CD8-positive, alpha-beta T cell (primary cell): ENCODE measurements at regions of chr1 and their contacts with region 1.

Region 1: GRCh38 chr1:152459596-152460528 is 45.8 kb upstream of the CRNN start:
- DNase-seq: peak; percentile 45 to 86 (median 74)
- ATAC-seq: peak; percentile 66
- H3K4me3 ChIP-seq: peak overlapping the region in 1 of 2 experiments; percentile 16
- H3K4me3 Mint-ChIP-seq: peak overlapping the region; percentile 70
- H3K27ac ChIP-seq: peak overlapping the region in 1 of 2 experiments; percentile 72
- H3K27ac Mint-ChIP-seq: peak overlapping the region; percentile 83
- H3K4me1 ChIP-seq: no peaks in the 10 kb centered on the region
- H3K4me1 Mint-ChIP-seq: peaks cover 26% of the 10 kb centered on the region
- H3K27me3 ChIP-seq: no peaks in the 10 kb centered on the region
- H3K27me3 Mint-ChIP-seq: peaks cover 2% of the 10 kb centered on the region
- CTCF ChIP-seq: peak; percentile 70

Region 2: GRCh38 chr1:152347116-152347728 is 112.6 kb before region 1 on chr1:
- CTCF ChIA-PET with region 1: interaction called, 23 read pairs
- POLR2A ChIA-PET with region 1: interaction called, 3 read pairs
- intact Hi-C with region 1: loop called (anchors 1 kb)
- DNase-seq: peak in 8 of 9 experiments; percentile 5 to 71 (median 36)
- ATAC-seq: peak; percentile 58
- H3K4me3 ChIP-seq: no peak overlapping the region
- H3K4me3 Mint-ChIP-seq: no peak overlapping the region
- H3K27ac ChIP-seq: no peak overlapping the region
- H3K27ac Mint-ChIP-seq: no peak overlapping the region
- H3K4me1 ChIP-seq: no peaks in the 10 kb centered on the region
- H3K4me1 Mint-ChIP-seq: no peaks in the 10 kb centered on the region
- H3K27me3 ChIP-seq: no peaks in the 10 kb centered on the region
- H3K27me3 Mint-ChIP-seq: peaks cover 8% of the 10 kb centered on the region
- CTCF ChIP-seq: peak; percentile 98

Region 3: DNA sequence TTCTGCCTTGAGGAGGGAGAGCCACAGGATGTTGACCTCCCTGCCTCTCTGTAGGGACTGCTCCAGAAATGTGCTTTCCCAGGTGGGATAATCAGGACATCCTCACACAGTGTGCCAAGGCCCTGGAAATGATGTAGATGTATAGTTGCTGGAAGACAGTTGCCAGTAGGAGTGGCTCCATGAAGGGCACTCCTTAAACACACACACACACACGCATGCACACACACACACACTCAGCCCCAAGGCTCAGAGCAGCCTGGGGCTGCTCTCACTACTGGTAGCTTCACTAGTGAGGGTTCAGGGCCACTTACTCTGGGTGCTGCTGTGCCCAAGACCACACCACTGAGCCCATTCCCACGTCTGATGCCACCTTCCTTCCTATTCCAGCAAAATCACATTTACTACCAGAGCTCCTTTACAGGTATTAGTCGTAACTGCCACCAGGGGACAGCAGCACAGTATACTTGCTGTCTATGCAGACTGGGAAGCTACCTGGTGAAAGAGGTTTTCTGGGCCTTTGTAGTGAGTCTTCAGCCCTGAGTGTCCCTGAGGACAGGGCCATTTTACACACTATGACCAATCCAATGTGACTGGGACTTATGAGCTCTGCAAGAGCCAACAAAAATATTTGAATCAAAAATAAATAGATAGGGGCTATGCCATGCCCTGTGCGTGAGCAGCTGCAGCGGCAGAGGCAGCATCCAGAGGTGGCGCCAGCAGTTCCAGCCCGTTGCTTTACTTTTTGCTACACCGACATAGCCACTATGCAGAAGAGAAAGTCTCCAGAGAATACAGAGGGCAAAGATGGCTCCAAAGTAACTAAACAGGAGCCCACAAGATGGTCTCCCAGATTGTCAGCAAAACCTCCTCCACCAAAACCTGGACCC is 60.8 kb before region 1 on chr1:
- CTCF ChIA-PET with region 1: interaction called, 25 read pairs
- POLR2A ChIA-PET with region 1: no interaction called
- intact Hi-C with region 1: no loop called
- DNase-seq: peak in 2 of 9 experiments; percentile 30 to 48
- ATAC-seq: no peak
- H3K4me3 ChIP-seq: no peak overlapping the region
- H3K4me3 Mint-ChIP-seq: no peak overlapping the region
- H3K27ac ChIP-seq: no peak overlapping the region
- H3K27ac Mint-ChIP-seq: no peak overlapping the region
- H3K4me1 ChIP-seq: no peaks in the 10 kb centered on the region
- H3K4me1 Mint-ChIP-seq: peaks cover 6% of the 10 kb centered on the region
- H3K27me3 ChIP-seq: no peaks in the 10 kb centered on the region
- H3K27me3 Mint-ChIP-seq: peaks cover 13% of the 10 kb centered on the region
- CTCF ChIP-seq: no peak

Region 4: GRCh38 chr1:152440635-152441471 is 19.0 kb before region 1 on chr1:
- CTCF ChIA-PET with region 1: interaction called, 62 read pairs
- POLR2A ChIA-PET with region 1: interaction called, 3 read pairs
- intact Hi-C with region 1: loop called in 1 of 2 experiments (anchors 1 kb)
- DNase-seq: peak; percentile 35 to 82 (median 63)
- ATAC-seq: peak; percentile 95
- H3K4me3 ChIP-seq: no peak overlapping the region
- H3K4me3 Mint-ChIP-seq: no peak overlapping the region
- H3K27ac ChIP-seq: no peak overlapping the region
- H3K27ac Mint-ChIP-seq: no peak overlapping the region
- H3K4me1 ChIP-seq: no peaks in the 10 kb centered on the region
- H3K4me1 Mint-ChIP-seq: peaks cover 3% of the 10 kb centered on the region
- H3K27me3 ChIP-seq: no peaks in the 10 kb centered on the region
- H3K27me3 Mint-ChIP-seq: peaks cover 27% of the 10 kb centered on the region
- CTCF ChIP-seq: peak; percentile 75

Region 5: GRCh38 chr1:152479792-152480595 is 20.1 kb after region 1 on chr1:
- CTCF ChIA-PET with region 1: interaction called, 14 read pairs
- POLR2A ChIA-PET with region 1: no interaction called
- intact Hi-C with region 1: no loop called
- DNase-seq: peak; percentile 15 to 74 (median 62)
- ATAC-seq: peak; percentile 63
- H3K4me3 ChIP-seq: no peak overlapping the region
- H3K4me3 Mint-ChIP-seq: no peak overlapping the region
- H3K27ac ChIP-seq: no peak overlapping the region
- H3K27ac Mint-ChIP-seq: no peak overlapping the region
- H3K4me1 ChIP-seq: no peaks in the 10 kb centered on the region
- H3K4me1 Mint-ChIP-seq: peaks cover 7% of the 10 kb centered on the region
- H3K27me3 ChIP-seq: no peaks in the 10 kb centered on the region
- H3K27me3 Mint-ChIP-seq: no peaks in the 10 kb centered on the region
- CTCF ChIP-seq: no peak